ENCODE measurements at regions of chr5 and their contacts with region 1.

Region 1: GRCh38 chr5:3594510-3595005 is 1.1 kb upstream of the IRX1 start:
- DNase-seq: no peak
- ATAC-seq: no peak
- H3K4me3 ChIP-seq: no peak overlapping the region
- H3K4me3 Mint-ChIP-seq: peak overlapping the region in 2 of 10 donors; percentile 8 to 23
- H3K27ac ChIP-seq: no peak overlapping the region
- H3K27ac Mint-ChIP-seq: peak overlapping the region in 1 of 9 donors; percentile 71
- H3K4me1 ChIP-seq: no peaks in the 10 kb centered on the region
- H3K4me1 Mint-ChIP-seq: peaks cover 0 to 20% (median 8%) of the 10 kb centered on the region in 7 donors
- H3K27me3 ChIP-seq: no peaks in the 10 kb centered on the region
- H3K27me3 Mint-ChIP-seq: peaks cover 64 to 74% (median 68%) of the 10 kb centered on the region in 5 donors

Region 2: DNA sequence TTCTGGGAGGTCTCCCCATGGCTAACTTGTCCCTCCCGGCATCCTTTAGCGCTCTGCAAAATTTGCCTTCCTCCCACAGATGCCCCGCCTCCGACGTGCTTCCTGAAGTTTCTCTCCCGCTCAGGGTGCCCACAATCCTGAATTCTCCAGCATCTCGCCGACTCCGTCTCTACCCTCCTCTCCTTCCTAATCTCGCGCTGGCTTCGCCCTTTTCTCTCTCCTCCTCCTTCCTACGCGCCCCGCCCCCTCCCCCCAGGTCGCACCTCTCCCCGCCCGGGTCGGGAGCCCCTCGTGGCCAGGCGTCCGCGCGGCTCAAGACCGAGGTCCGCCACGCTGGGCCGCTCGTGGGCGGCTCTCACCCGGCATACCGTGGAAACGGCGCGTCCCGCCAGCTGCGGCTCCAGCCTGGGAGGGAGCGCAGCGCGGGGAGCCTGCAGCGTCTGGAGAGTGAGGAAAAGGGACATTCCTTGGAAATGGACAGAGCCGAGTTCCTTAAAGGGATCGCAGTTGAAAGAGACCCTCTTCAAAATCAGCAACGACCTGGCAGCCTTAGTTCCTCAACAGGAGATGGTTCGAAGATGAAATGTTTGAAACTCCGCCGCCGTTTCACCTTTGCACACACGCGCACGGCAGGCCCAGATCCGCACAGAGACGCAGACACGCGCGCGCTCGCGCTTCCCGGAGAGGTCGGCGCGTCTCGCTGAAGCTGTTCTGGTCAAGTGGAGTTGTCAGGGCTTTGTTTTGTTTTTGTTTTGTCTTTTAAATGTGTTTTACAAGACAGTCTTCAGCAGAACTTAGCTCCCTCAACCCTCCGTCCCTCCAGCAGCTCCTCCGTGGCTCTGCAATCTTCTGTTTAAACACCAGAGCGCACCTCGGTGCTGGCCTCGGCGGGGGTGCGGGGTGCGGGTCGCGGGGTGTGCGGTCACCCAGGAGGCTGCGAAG is 838.1 kb before region 1 on chr5:
- CTCF ChIA-PET with region 1: no interaction called
- POLR2A ChIA-PET with region 1: no interaction called
- intact Hi-C with region 1: loop called in 1 of 2 experiments (anchors 5 kb)
- DNase-seq: no peak
- ATAC-seq: no peak
- H3K4me3 ChIP-seq: no peak overlapping the region
- H3K4me3 Mint-ChIP-seq: peak overlapping the region in 9 of 10 donors; percentile 7 to 76 (median 54)
- H3K27ac ChIP-seq: no peak overlapping the region
- H3K27ac Mint-ChIP-seq: peak overlapping the region in 1 of 9 donors; percentile 52
- H3K4me1 ChIP-seq: no peaks in the 10 kb centered on the region
- H3K4me1 Mint-ChIP-seq: peaks cover 9 to 30% (median 13%) of the 10 kb centered on the region in 7 donors
- H3K27me3 ChIP-seq: no peaks in the 10 kb centered on the region
- H3K27me3 Mint-ChIP-seq: peaks cover 50 to 76% (median 62%) of the 10 kb centered on the region in 5 donors

Region 3: DNA sequence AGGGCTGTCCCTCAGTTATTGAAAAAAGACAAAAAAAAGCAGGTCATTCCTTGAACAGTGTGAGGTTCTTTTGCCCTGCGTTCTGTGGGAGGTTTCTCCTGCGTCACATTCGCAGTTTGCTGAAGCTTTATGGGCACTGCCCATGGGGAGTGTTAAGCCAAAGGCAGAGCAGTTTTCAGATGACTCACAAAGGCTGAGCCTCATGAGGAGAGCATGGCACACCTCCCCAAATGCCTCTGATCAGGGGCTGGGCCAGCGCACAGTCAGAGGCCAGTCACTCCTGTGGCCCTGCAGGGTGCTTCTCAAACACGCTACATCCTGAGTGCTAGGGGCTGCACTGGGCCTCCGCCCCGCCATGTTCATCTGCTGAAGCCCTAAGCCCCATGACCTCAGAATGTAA is 39.5 kb after region 1 on chr5:
- CTCF ChIA-PET with region 1: no interaction called
- POLR2A ChIA-PET with region 1: no interaction called
- intact Hi-C with region 1: no loop called
- DNase-seq: no peak
- ATAC-seq: no peak
- H3K4me3 ChIP-seq: no peak overlapping the region
- H3K4me3 Mint-ChIP-seq: no peak overlapping the region
- H3K27ac ChIP-seq: no peak overlapping the region
- H3K27ac Mint-ChIP-seq: no peak overlapping the region
- H3K4me1 ChIP-seq: no peaks in the 10 kb centered on the region
- H3K4me1 Mint-ChIP-seq: no peaks in the 10 kb centered on the region
- H3K27me3 ChIP-seq: no peaks in the 10 kb centered on the region
- H3K27me3 Mint-ChIP-seq: peaks cover 0 to 5% (median 0%) of the 10 kb centered on the region in 5 donors

Region 4: DNA sequence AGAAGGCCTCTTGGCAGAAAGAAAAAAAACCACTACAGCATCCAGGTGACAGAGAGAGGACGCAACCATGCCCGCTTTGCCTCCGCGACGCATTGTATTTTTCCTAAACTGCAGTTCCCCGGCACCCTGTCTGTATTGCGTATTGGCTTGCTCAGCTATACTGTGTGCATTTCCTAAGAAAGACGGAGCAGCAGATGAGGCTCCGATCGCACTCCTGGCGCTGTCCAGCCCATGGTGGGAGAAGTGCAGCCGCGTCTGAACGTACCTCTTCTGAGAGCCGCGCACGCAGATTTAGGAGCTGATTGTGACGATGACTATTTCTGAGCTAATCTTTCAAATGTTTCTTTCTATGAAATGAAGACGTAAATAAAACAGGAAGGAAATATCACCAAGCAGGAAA is 367.6 kb after region 1 on chr5:
- CTCF ChIA-PET with region 1: no interaction called
- POLR2A ChIA-PET with region 1: no interaction called
- intact Hi-C with region 1: no loop called
- DNase-seq: no peak
- ATAC-seq: no peak
- H3K4me3 ChIP-seq: no peak overlapping the region
- H3K4me3 Mint-ChIP-seq: peak overlapping the region in 1 of 10 donors; percentile 43
- H3K27ac ChIP-seq: no peak overlapping the region
- H3K27ac Mint-ChIP-seq: peak overlapping the region in 1 of 9 donors; percentile 23
- H3K4me1 ChIP-seq: no peaks in the 10 kb centered on the region
- H3K4me1 Mint-ChIP-seq: no peaks in the 10 kb centered on the region
- H3K27me3 ChIP-seq: no peaks in the 10 kb centered on the region
- H3K27me3 Mint-ChIP-seq: no peaks in the 10 kb centered on the region